AG04450 (cell line): ENCODE measurements at regions of chr4 and their contacts with region 1.

Region 1: GRCh38 chr4:38948551-38948950 is 80.9 kb downstream of the FAM114A1 start:
- DNase-seq: peak; percentile 85
- H3K4me3 ChIP-seq: no peak overlapping the region
- H3K27ac ChIP-seq: peak overlapping the region; percentile 78
- H3K27me3 ChIP-seq: no peaks in the 10 kb centered on the region
- CTCF ChIP-seq: no peak

Region 2: GRCh38 chr4:37905531-37906169 is 1042.9 kb before region 1 on chr4:
- CTCF ChIA-PET with region 1: no interaction called
- POLR2A ChIA-PET with region 1: no interaction called
- DNase-seq: no peak
- H3K4me3 ChIP-seq: no peak overlapping the region
- H3K27ac ChIP-seq: no peak overlapping the region
- H3K27me3 ChIP-seq: no peaks in the 10 kb centered on the region
- CTCF ChIP-seq: no peak

Region 3: GRCh38 chr4:38958453-38959190 is 10.1 kb after region 1 on chr4:
- CTCF ChIA-PET with region 1: interaction called, 3 read pairs
- POLR2A ChIA-PET with region 1: interaction called, 10 read pairs
- DNase-seq: no peak
- H3K4me3 ChIP-seq: no peak overlapping the region
- H3K27ac ChIP-seq: peak overlapping the region; percentile 75
- H3K27me3 ChIP-seq: no peaks in the 10 kb centered on the region
- CTCF ChIP-seq: peak; percentile 25; the same call in 1 of the 2 replicates

Region 4: GRCh38 chr4:39044364-39044955 is 95.9 kb after region 1 on chr4:
- CTCF ChIA-PET with region 1: no interaction called
- POLR2A ChIA-PET with region 1: interaction called, 32 read pairs
- DNase-seq: peak; percentile 82
- H3K4me3 ChIP-seq: peak overlapping the region; percentile 74
- H3K27ac ChIP-seq: peak overlapping the region; percentile 90
- H3K27me3 ChIP-seq: no peaks in the 10 kb centered on the region
- CTCF ChIP-seq: peak; percentile 14; the same call in 1 of the 2 replicates